ENCODE measurements at regions of chr11 and their contacts with region 1.

Region 1: DNA sequence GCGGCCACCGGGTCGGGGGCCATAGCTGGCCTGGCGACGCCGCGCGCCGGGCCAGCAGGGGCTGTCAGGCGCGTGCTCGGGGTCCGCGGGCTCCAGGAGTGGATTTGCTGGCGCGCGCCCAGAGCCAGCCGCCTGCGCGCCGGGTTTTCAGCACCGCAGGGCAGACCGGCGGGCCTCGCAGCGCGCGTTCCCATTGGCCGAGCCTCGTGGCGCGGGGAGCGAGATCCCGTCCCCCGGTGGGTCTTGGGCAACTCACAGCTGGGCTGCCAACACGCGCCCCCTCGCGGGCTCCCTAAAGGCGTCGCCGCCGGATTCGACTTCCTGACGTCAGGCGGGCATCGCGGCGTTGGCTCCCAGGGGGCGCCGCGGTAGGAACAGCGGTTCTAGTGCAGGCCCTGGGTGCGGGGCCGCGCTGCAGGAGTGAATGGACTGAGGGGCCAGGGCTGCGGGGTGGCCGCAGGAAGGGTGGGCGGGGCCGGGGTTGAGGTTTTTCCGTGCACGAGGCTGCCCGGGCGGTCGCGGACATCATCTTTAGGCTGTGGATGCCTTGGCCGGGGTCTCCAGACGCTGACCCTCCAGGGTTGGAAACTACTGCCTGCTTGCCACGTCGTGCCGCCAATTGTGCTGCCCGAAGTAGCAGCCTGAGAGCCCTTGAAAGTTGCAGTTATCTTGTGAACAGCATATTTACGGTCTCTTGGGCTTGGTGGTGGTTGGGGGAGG is at the start of gene FADS1:
- DNase-seq: peak; percentile 85
- H3K4me3 Mint-ChIP-seq: peak within 1 kb of the TSS; percentile 93
- H3K27ac Mint-ChIP-seq: peak within 1 kb of the TSS; percentile 94
- H3K4me1 Mint-ChIP-seq: peaks cover 17% of the 10 kb centered on the region
- H3K27me3 Mint-ChIP-seq: peaks cover 22% of the 10 kb centered on the region
- total RNA-seq, gene FADS1: 25.7 to 27.1 TPM

Region 2: GRCh38 chr11:61769169-61769920 is 47.6 kb before region 1 on chr11:
- CTCF ChIA-PET with region 1: no interaction called
- POLR2A ChIA-PET with region 1: no interaction called
- DNase-seq: no peak
- H3K4me3 Mint-ChIP-seq: no peak overlapping the region
- H3K27ac Mint-ChIP-seq: no peak overlapping the region
- H3K4me1 Mint-ChIP-seq: peaks cover 13% of the 10 kb centered on the region
- H3K27me3 Mint-ChIP-seq: no peaks in the 10 kb centered on the region

Region 3: DNA sequence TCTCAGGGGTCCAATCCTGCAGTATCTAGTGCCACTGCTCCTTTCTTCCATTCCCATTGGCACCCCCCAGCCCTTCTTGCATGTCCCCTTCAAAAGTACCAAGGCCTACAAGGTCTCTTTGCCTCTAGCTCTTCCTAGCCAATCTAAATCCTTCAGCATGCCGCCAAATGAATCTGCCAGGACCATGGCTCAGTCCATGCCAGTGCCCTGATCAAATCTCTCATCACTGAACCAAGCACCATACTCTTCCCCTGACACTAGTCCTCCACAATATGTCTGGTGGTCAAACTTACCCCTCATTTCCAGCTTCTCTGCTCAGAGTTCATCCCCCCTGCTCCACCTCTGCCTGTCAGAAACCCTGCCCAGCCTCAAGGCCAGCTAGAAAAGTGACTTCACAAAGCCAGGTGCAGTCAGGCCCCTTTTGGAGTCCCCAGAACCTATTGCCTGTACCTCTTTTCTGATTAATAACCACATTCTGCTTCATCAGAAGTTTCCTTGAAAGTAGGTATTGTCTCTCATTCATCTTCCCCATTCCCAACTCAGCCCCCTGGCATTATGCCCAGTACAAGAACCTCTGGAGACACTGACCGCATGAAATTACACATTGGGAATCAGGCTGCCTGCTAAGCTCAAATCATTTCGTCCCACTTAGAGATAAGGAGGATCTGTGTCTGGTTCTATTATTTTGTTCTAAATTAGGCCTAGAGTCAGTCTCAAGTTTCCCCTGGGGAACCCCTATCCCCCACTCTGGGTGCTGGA is 12.8 kb before region 1 on chr11:
- CTCF ChIA-PET with region 1: interaction called, 57 read pairs
- POLR2A ChIA-PET with region 1: no interaction called
- DNase-seq: no peak
- H3K4me3 Mint-ChIP-seq: no peak overlapping the region
- H3K27ac Mint-ChIP-seq: no peak overlapping the region
- H3K4me1 Mint-ChIP-seq: peaks cover 9% of the 10 kb centered on the region
- H3K27me3 Mint-ChIP-seq: no peaks in the 10 kb centered on the region

Region 4: GRCh38 chr11:61827571-61828378 is 10.9 kb after region 1 on chr11 and contains the start of gene FADS2:
- CTCF ChIA-PET with region 1: interaction called, 42 read pairs
- POLR2A ChIA-PET with region 1: interaction called, 9 read pairs
- DNase-seq: peak; percentile 91
- H3K4me3 Mint-ChIP-seq: peak within 1 kb of the TSS; percentile 85
- H3K27ac Mint-ChIP-seq: peak within 1 kb of the TSS; percentile 93
- H3K4me1 Mint-ChIP-seq: peaks cover 41% of the 10 kb centered on the region
- H3K27me3 Mint-ChIP-seq: peaks cover 6% of the 10 kb centered on the region
- total RNA-seq, gene FADS2: 128 to 135 TPM

Measured in activated CD4-positive, alpha-beta T cell treated with anti-CD3 and anti-CD28 coated beads, Interleukin-2, amount 10 ng/mL, durations not matched to agents 7 days and 5 days (primary cell).